Activated naive CD4-positive, alpha-beta T cell treated with anti-CD3 and anti-CD28 coated beads for 36 hours (primary cell): ENCODE measurements at regions of chr2 and their contacts with region 1.

Region 1: GRCh38 chr2:135985018-135985825 is at the start of gene DARS1:
- DNase-seq: peak; percentile 90
- H3K4me3 Mint-ChIP-seq: peak within 1 kb of the TSS; percentile 95
- H3K27ac Mint-ChIP-seq: peak within 1 kb of the TSS; percentile 97
- H3K4me1 Mint-ChIP-seq: peaks cover 39% of the 10 kb centered on the region
- H3K27me3 Mint-ChIP-seq: no peaks in the 10 kb centered on the region
- total RNA-seq, gene DARS1: 161 to 177 TPM

Region 2: DNA sequence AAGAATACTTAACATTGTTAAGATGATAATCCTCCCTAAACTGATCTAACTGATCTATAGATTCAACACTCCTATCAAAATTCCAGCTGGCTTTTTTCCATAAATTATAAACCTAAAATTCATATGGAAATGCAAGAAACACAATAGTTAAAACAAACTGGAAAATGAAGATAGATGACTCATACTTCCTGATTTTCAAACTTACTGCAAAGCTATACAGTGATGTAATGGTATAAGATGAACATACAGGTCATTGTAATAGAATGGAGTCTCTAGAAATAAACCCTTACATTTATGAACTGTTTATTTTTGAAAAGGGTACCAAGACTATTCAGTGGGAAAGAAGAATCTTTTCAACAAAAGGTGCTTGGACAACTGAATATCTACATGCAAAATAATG is 211.3 kb before region 1 on chr2:
- CTCF ChIA-PET with region 1: no interaction called
- intact Hi-C with region 1: no loop called
- DNase-seq: no peak
- H3K4me3 Mint-ChIP-seq: no peak overlapping the region
- H3K27ac Mint-ChIP-seq: peak overlapping the region; percentile 74
- H3K4me1 Mint-ChIP-seq: peaks cover 10% of the 10 kb centered on the region
- H3K27me3 Mint-ChIP-seq: no peaks in the 10 kb centered on the region

Region 3: GRCh38 chr2:135820003-135820618 is 165.1 kb before region 1 on chr2:
- CTCF ChIA-PET with region 1: no interaction called
- intact Hi-C with region 1: loop called (anchors 1 kb)
- DNase-seq: peak; percentile 94
- H3K4me3 Mint-ChIP-seq: peak overlapping the region; percentile 64
- H3K27ac Mint-ChIP-seq: peak overlapping the region; percentile 79
- H3K4me1 Mint-ChIP-seq: peaks cover 48% of the 10 kb centered on the region
- H3K27me3 Mint-ChIP-seq: no peaks in the 10 kb centered on the region

Region 4: GRCh38 chr2:136008205-136008865 is 23.1 kb after region 1 on chr2:
- CTCF ChIA-PET with region 1: interaction called, 3 read pairs
- intact Hi-C with region 1: loop called (anchors 1 kb)
- DNase-seq: peak; percentile 73
- H3K4me3 Mint-ChIP-seq: no peak overlapping the region
- H3K27ac Mint-ChIP-seq: peak overlapping the region; percentile 15
- H3K4me1 Mint-ChIP-seq: peaks cover 38% of the 10 kb centered on the region
- H3K27me3 Mint-ChIP-seq: no peaks in the 10 kb centered on the region

Region 5: GRCh38 chr2:136059036-136059472 is 73.8 kb after region 1 on chr2:
- CTCF ChIA-PET with region 1: interaction called, 3 read pairs
- intact Hi-C with region 1: loop called (anchors 1 kb)
- DNase-seq: no peak
- H3K4me3 Mint-ChIP-seq: no peak overlapping the region
- H3K27ac Mint-ChIP-seq: no peak overlapping the region
- H3K4me1 Mint-ChIP-seq: peaks cover 59% of the 10 kb centered on the region
- H3K27me3 Mint-ChIP-seq: no peaks in the 10 kb centered on the region

Region 6: GRCh38 chr2:136305517-136306192 is 320.4 kb after region 1 on chr2:
- CTCF ChIA-PET with region 1: no interaction called
- intact Hi-C with region 1: loop called (anchors 2 kb)
- DNase-seq: peak; percentile 85
- H3K4me3 Mint-ChIP-seq: no peak overlapping the region
- H3K27ac Mint-ChIP-seq: peak overlapping the region; percentile 81
- H3K4me1 Mint-ChIP-seq: peaks cover 21% of the 10 kb centered on the region
- H3K27me3 Mint-ChIP-seq: no peaks in the 10 kb centered on the region